Breast epithelium (tissue), 4 donors: ENCODE measurements at regions of chr14 and their contacts with region 1.

Region 1: DNA sequence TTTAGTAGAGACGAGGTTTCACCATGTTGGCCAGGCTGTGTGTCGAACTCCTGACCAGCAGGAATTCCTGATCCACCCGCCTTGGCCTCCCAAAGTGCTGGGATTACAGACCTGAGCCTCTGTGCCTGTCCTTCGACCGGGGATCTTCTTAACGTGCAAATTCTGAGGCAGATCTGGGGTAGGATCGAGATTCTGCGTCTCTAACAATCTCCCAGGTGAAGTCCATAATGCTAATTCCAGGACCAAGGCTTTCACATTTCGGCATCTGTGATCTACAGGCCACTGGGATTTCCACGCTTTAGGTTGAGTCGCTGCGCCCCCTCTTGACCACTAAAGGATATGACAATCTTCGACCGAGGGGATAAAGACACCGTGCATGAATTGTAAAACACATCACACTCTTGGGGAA is 24.8 kb downstream of the FOS start:
- DNase-seq: peak in 1 of 2 donors; percentile 67
- H3K4me3 ChIP-seq: no peak overlapping the region
- H3K27ac ChIP-seq: no peak overlapping the region
- H3K4me1 ChIP-seq: peaks cover 0 to 4% of the 10 kb centered on the region in 2 donors
- H3K27me3 ChIP-seq: no peaks in the 10 kb centered on the region
- CTCF ChIP-seq: peak; percentile 91 to 95 (median 93)
- POLR2A ChIP-seq: no peak

Region 2: DNA sequence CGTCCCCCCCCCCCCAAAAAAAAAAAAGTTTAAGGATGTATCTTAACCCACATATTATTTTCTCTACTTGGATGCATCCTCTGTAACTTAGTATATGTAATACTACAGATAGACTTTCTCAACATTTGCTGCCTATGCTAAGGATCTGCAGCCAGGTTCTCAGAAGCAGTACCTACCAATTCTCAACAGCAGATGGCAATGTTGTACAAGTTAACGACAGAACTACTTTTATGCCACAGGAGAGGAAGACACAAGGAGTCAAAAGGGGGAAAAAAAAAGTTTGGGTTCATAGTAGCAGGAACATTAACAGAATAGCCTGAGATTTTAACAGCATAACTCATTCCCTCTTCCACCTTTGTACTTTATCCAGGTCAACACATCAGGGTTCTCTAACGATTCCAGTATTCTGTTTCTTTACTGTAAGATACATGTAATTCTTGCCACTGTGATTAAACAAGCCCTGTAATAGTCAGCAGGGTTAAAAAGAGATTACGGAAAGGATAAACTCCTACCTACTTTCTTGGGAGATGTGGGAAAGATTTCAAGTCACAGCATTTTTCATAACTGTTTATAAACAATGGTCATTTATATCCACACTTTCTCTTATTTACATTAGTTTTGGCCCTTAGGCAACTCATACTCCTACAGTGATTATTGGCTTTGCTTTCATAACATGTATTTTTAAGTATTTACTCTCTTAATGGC is 170.9 kb before region 1 on chr14:
- intact Hi-C with region 1: loop called (anchors 5 kb)
- DNase-seq: peak in 1 of 2 donors; percentile 51
- H3K4me3 ChIP-seq: no peak overlapping the region
- H3K27ac ChIP-seq: peak overlapping the region; percentile 64 to 69
- H3K4me1 ChIP-seq: peaks cover 0 to 7% of the 10 kb centered on the region in 2 donors
- H3K27me3 ChIP-seq: no peaks in the 10 kb centered on the region
- CTCF ChIP-seq: peak; percentile 84 to 92 (median 89)
- POLR2A ChIP-seq: no peak

Region 3: GRCh38 chr14:75440733-75441477 is 137.5 kb after region 1 on chr14:
- intact Hi-C with region 1: no loop called
- DNase-seq: no peak
- H3K4me3 ChIP-seq: peak overlapping the region in 1 of 3 donors; percentile 13
- H3K27ac ChIP-seq: peak overlapping the region; percentile 60 to 78
- H3K4me1 ChIP-seq: no peaks in the 10 kb centered on the region
- H3K27me3 ChIP-seq: no peaks in the 10 kb centered on the region
- CTCF ChIP-seq: peak in 1 of 3 donors; percentile 37
- POLR2A ChIP-seq: no peak

Region 4: GRCh38 chr14:75476274-75476995 is 173.1 kb after region 1 on chr14:
- intact Hi-C with region 1: loop called (anchors 5 kb)
- DNase-seq: no peak
- H3K4me3 ChIP-seq: no peak overlapping the region
- H3K27ac ChIP-seq: no peak overlapping the region
- H3K4me1 ChIP-seq: no peaks in the 10 kb centered on the region
- H3K27me3 ChIP-seq: no peaks in the 10 kb centered on the region
- CTCF ChIP-seq: no peak
- POLR2A ChIP-seq: no peak